ENCODE measurements at regions of chr9 and their contacts with region 1.

Region 1: GRCh38 chr9:36597412-36598178 is 24.9 kb downstream of the MELK start:
- DNase-seq: peak; percentile 25
- CTCF ChIP-seq: peak; percentile 49

Region 2: DNA sequence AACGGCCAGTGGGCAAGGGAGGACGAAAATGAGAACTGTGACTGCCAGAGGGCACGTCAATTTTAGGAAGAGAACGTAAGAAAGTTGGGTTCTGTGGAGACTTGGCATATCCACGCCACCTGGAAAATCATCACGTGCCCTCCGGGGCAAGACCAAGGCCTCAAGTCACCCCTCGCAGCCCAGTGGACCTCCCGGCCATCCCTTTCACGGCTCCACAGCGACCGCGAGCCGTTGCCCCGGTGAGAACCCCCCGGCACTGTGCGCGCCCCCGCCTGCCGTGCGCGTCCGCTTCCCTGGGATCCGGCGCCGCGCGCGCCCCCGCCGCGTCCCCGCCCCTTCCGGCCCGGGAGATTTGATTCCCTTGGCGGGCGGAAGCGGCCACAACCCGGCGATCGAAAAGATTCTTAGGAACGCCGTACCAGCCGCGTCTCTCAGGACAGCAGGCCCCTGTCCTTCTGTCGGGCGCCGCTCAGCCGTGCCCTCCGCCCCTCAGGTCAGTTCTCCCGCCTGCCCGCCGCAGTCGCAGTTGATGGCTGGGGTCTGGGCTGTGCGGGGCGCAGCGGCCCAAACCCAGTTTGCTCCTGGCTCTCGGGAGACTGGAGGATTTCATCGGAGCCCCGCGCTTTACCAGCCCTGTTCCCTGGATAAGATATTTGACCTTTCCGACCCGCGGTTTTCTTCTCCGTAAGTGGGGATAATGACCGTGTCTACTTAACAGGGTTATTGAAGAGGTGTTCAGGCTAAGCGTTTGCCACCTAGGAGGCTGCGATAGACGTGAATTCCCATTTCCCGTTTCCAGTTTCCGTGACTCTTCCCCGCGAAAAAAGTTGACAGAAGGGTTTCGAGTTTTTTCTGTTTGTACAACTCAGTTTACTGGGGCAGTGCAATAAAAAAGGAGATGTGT is 24.8 kb before region 1 on chr9 and contains the start of gene MELK:
- CTCF ChIA-PET with region 1: interaction called, 10 read pairs
- POLR2A ChIA-PET with region 1: no interaction called
- DNase-seq: peak; percentile 95
- CTCF ChIP-seq: no peak

Region 3: GRCh38 chr9:36612946-36613345 is 15.4 kb after region 1 on chr9:
- CTCF ChIA-PET with region 1: interaction called, 15 read pairs
- POLR2A ChIA-PET with region 1: no interaction called
- DNase-seq: no peak
- CTCF ChIP-seq: no peak

Region 4: GRCh38 chr9:37209431-37210386 is 612.1 kb after region 1 on chr9:
- CTCF ChIA-PET with region 1: no interaction called
- POLR2A ChIA-PET with region 1: no interaction called
- DNase-seq: no peak
- CTCF ChIP-seq: no peak

Measured in GM10248 (cell line).